ENCODE measurements at regions of chrX and their contacts with region 1.

Region 1: GRCh38 chrX:72540318-72540717 is 32.3 kb downstream of the HDAC8 start:
- DNase-seq: no peak
- H3K4me3 ChIP-seq: no peak overlapping the region
- H3K27ac ChIP-seq: peak overlapping the region in 1 of 2 donors; percentile 30
- H3K4me1 ChIP-seq: peaks cover 0 to 13% (median 0%) of the 10 kb centered on the region in 4 donors
- H3K27me3 ChIP-seq: no peaks in the 10 kb centered on the region
- CTCF ChIP-seq: peak; percentile 24 to 27

Region 2: GRCh38 chrX:72306851-72307645 is 233.3 kb before region 1 on chrX:
- intact Hi-C with region 1: loop called (anchors 10 kb)
- DNase-seq: peak; percentile 49 to 73
- H3K4me3 ChIP-seq: peak overlapping the region; percentile 49 to 58
- H3K27ac ChIP-seq: peak overlapping the region in 1 of 2 donors; percentile 21
- H3K4me1 ChIP-seq: peaks cover 0 to 50% (median 29%) of the 10 kb centered on the region in 4 donors
- H3K27me3 ChIP-seq: peaks cover 0 to 20% of the 10 kb centered on the region in 2 donors
- CTCF ChIP-seq: no peak

Region 3: DNA sequence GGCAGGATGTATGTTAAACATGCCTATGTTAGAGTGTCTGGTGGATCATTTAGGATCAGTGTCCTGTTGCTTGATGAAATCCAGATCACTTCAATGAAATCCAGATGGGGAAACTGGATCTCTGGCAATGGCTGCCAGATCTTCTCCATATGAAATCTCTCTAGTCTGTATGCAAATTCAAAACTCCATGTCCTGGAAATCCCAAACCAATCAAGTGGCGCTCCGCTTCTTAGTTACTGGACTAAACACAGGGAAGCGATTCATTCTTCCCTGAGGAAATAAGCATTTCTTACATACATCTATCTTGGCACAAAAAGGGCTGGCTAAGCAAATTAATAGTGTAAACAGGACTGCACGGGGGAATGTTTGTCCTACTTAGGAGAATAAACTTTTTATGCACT is 62.5 kb before region 1 on chrX:
- intact Hi-C with region 1: no loop called
- DNase-seq: no peak
- H3K4me3 ChIP-seq: no peak overlapping the region
- H3K27ac ChIP-seq: no peak overlapping the region
- H3K4me1 ChIP-seq: no peaks in the 10 kb centered on the region
- H3K27me3 ChIP-seq: no peaks in the 10 kb centered on the region
- CTCF ChIP-seq: no peak

Region 4: DNA sequence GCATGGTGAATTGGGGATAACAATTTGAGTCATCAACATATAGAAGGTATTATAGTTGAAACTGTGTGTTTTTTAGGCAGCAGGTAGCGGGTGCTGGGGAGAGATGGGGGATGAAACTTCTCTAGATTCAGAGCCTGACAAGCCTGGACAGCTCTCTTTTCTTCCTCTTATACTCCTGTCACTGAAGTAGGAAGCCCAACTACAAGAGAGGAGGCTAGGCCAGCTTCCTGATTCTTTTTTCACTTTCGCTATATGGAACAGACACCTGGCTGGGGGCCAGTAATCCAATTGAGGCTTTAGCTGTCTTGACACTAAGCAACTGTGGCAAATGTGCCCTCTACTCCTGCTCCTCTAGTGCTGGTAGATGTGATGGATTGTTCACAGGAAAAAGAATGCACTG is 104.6 kb after region 1 on chrX:
- intact Hi-C with region 1: no loop called
- DNase-seq: peak in 1 of 2 donors; percentile 21
- H3K4me3 ChIP-seq: no peak overlapping the region
- H3K27ac ChIP-seq: no peak overlapping the region
- H3K4me1 ChIP-seq: no peaks in the 10 kb centered on the region
- H3K27me3 ChIP-seq: no peaks in the 10 kb centered on the region
- CTCF ChIP-seq: no peak

Region 5: DNA sequence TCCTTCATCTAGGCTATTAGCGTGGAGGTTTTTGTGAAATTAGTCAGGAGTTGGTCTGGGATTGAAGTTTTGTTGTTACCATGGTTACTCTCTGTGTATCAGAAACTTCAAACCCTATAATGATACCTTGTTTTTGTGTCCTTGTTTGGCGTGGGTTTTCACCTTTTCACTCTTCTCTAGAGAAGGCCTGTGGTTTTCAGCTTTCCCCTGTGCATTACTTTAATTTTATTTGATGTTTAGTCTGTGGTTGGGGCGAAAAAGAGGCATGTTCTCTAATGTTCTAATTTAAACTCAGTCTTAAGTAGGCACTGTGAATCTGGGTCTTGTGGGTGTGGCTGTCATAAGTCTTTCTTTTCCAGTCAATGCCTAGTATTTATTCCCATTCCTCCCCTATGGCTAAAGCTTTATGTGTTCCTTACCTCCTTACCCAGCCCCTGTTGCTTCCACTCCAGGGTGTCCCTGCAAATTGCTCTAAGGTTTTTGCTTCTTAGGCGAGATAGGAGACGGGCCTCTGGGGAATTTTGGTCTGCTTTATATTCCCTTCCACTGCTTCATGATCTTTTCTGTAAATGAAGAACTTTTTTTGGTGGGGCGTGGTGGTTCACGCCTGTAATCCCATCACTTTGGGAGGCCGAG is 1437.3 kb after region 1 on chrX:
- intact Hi-C with region 1: no loop called
- DNase-seq: no peak
- H3K4me3 ChIP-seq: no peak overlapping the region
- H3K27ac ChIP-seq: no peak overlapping the region
- H3K4me1 ChIP-seq: peaks cover 0 to 4% (median 2%) of the 10 kb centered on the region in 4 donors
- H3K27me3 ChIP-seq: no peaks in the 10 kb centered on the region
- CTCF ChIP-seq: no peak

Measured in tibial artery (tissue), 4 donors.